ENCODE measurements at regions of chr5 and their contacts with region 1.

Region 1: DNA sequence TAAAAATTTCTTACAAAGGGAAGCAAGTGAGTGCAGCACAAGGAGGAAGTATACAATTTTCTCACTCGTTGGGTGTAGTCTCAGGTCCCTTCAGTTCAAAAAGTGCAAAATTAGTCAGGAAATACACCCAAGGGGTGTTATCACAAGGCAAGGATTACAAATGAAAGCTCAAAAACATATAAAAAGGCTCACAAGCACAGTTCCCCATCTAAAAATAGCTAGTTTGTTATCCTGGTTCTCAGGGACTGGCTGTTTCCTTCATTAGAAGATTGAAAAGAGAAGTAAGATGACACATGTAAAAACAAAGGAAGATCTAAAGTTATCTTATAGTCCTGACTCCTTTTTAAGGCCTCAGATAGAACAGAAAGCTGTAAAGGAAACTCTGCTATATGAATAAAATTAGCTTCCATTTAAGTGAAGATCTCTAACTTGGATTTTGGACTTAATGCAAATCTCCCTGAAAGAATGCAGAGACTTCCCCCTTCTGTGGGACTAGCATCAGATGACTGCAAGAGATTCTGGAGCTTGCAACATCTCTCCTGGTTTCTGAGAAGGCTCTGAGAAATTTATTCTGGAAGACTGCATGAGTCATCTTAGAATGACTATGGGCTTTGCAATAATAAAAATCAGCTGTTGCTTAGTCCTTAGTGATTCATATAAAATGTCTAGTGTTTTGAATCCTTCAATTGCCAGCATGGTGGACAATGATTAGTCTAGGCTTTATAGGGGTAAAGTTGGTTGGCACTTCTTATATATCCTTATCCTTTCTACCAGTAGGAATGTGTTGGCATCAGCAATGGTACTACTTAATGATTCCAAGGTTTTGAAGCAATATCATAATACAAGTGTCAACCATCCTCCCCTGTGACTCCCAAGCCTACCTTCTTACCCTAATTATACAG is 25.4 kb downstream of the DAB2 start:
- DNase-seq: peak; percentile 35 to 71
- H3K4me3 ChIP-seq: no peak overlapping the region
- H3K27ac ChIP-seq: peak overlapping the region; percentile 79 to 91
- H3K4me1 ChIP-seq: peaks cover 3 to 28% of the 10 kb centered on the region in 2 donors
- H3K27me3 ChIP-seq: no peaks in the 10 kb centered on the region
- CTCF ChIP-seq: no peak

Region 2: GRCh38 chr5:39520232-39520572 is 120.8 kb after region 1 on chr5:
- intact Hi-C with region 1: loop called (anchors 5 kb)
- DNase-seq: no peak
- H3K4me3 ChIP-seq: no peak overlapping the region
- H3K27ac ChIP-seq: peak overlapping the region; percentile 50 to 51
- H3K4me1 ChIP-seq: peaks cover 5 to 18% of the 10 kb centered on the region in 2 donors
- H3K27me3 ChIP-seq: no peaks in the 10 kb centered on the region
- CTCF ChIP-seq: no peak

Region 3: GRCh38 chr5:39578887-39579497 is 179.6 kb after region 1 on chr5:
- intact Hi-C with region 1: no loop called
- DNase-seq: no peak
- H3K4me3 ChIP-seq: no peak overlapping the region
- H3K27ac ChIP-seq: no peak overlapping the region
- H3K4me1 ChIP-seq: no peaks in the 10 kb centered on the region
- H3K27me3 ChIP-seq: no peaks in the 10 kb centered on the region
- CTCF ChIP-seq: peak in 2 of 3 experiments; percentile 67